IMR-90 (cell line): ENCODE measurements at regions of chr17 and their contacts with region 1.

Region 1: DNA sequence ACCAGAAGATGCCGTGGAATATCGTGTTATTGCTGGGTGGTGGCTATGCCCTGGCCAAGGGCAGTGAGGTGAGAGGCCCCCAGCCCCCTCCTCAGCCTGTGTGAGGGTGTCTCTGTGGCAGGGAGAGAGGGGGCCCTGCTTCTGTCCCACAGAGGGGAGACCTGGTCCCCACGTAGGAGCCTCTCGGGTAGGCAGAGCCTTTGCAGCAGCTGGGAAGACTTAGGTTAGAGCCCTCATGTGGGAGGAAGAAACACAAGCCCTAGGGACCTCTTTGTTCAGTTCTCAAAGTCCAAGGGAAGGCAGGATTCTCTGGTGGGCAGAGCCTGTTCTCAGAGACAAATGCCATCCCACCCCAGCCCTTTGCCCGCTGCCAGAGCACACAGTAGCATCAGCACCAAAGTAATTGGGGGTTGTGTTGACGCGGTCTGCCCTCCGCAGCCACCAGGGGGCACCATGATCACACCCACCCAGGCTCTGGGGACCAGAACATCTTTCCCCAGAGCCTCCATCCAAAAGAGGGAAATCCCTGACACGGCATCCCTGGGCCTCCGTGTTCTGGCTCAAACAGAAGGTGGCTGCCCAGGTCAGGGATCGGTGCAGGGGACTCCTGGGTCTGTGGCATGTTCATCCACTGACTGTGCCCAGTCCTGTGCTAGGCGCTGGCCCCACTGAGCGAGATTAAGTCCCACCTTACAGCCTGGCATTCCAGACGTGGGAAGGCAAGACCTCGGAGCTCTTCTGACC is 11.5 kb upstream of the FOXN1 start:
- DNase-seq: peak; percentile 52
- ATAC-seq: peak; percentile 88
- H3K4me3 ChIP-seq: no peak overlapping the region
- H3K27ac ChIP-seq: no peak overlapping the region
- H3K4me1 ChIP-seq: peaks cover 6% of the 10 kb centered on the region; the same call in 1 of the 2 replicates
- H3K27me3 ChIP-seq: peaks cover 15% of the 10 kb centered on the region; the same call in 1 of the 2 replicates
- CTCF ChIP-seq: peak; percentile 95
- POLR2A ChIP-seq: no peak
- RAD21 ChIP-seq: peak; percentile 97

Region 2: DNA sequence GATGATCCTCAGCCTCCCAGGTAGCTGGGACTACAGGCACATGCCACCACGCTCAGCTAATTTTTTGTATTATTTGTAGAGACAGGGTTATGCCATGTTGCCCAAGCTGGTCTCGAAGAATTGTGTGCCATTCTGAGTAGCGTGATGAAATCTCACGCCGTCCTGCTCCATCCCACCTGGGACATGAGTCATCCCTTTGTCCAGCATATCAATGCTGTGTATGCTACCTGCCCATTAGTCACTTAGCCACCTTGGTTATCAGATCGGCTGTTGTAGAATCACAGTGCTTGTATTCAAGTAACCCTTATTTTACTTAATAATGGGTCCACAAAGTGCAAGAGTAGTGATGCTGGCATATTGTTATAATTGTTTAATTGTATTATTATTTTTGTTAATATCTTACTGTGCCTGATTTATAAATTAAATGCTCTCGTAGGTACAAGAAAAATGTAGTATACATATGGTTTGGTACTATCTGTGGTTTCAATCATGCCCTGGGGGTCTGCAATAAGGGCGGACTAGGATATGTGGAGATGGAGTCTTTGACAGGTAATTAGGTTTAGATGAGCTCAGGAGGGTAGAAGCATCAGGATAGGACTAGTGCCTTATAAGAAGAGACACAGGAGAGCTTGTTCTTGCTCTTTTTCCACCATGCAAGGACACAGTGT is 47.8 kb before region 1 on chr17:
- CTCF ChIA-PET with region 1: no interaction called
- POLR2A ChIA-PET with region 1: no interaction called
- dilution Hi-C with region 1: no loop called
- in situ Hi-C with region 1: no loop called
- intact Hi-C with region 1: no loop called
- DNase-seq: no peak
- ATAC-seq: no peak
- H3K4me3 ChIP-seq: no peak overlapping the region
- H3K27ac ChIP-seq: no peak overlapping the region
- H3K4me1 ChIP-seq: no peaks in the 10 kb centered on the region
- H3K27me3 ChIP-seq: peaks cover 10% of the 10 kb centered on the region
- CTCF ChIP-seq: no peak
- POLR2A ChIP-seq: no peak
- RAD21 ChIP-seq: no peak

Region 3: DNA sequence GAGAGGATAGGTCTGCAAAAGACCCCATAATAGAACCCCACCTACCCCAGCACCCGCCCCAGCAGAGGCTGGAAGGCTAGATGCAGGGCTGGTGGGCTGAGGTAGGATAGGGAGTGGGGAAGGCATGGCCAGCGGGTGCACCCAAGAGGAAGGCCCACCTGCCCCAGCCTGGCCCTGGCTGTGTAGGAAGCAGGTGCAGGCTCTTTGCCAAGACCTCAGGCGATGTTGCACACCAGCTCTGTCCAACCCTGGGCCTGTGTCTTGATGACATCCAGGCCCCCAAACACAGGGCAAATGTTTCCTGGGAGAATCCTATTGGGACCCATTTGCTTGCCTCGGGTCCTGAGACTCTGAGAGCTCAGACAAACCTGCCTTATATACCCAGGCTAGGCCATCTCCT is 45.6 kb after region 1 on chr17:
- CTCF ChIA-PET with region 1: no interaction called
- POLR2A ChIA-PET with region 1: no interaction called
- dilution Hi-C with region 1: no loop called
- in situ Hi-C with region 1: loop called (anchors 5 kb)
- intact Hi-C with region 1: loop called (anchors 1 kb)
- DNase-seq: no peak
- ATAC-seq: no peak
- H3K4me3 ChIP-seq: no peak overlapping the region
- H3K27ac ChIP-seq: no peak overlapping the region
- H3K4me1 ChIP-seq: no peaks in the 10 kb centered on the region
- H3K27me3 ChIP-seq: peaks cover 23% of the 10 kb centered on the region
- CTCF ChIP-seq: no peak
- POLR2A ChIP-seq: no peak
- RAD21 ChIP-seq: no peak

Region 4: GRCh38 chr17:28612936-28613872 is 118.6 kb after region 1 on chr17:
- CTCF ChIA-PET with region 1: interaction called, 4 read pairs
- POLR2A ChIA-PET with region 1: no interaction called
- dilution Hi-C with region 1: no loop called
- in situ Hi-C with region 1: loop called (anchors 10 kb)
- intact Hi-C with region 1: loop called (anchors 1 kb)
- DNase-seq: peak; percentile 22
- ATAC-seq: peak; percentile 90
- H3K4me3 ChIP-seq: no peak overlapping the region
- H3K27ac ChIP-seq: no peak overlapping the region
- H3K4me1 ChIP-seq: no peaks in the 10 kb centered on the region
- H3K27me3 ChIP-seq: no peaks in the 10 kb centered on the region
- CTCF ChIP-seq: peak; percentile 59
- POLR2A ChIP-seq: no peak
- RAD21 ChIP-seq: peak; percentile 59